Left cardiac atrium (tissue), 4 donors: ENCODE measurements at regions of chr19 and their contacts with region 1.

Region 1: DNA sequence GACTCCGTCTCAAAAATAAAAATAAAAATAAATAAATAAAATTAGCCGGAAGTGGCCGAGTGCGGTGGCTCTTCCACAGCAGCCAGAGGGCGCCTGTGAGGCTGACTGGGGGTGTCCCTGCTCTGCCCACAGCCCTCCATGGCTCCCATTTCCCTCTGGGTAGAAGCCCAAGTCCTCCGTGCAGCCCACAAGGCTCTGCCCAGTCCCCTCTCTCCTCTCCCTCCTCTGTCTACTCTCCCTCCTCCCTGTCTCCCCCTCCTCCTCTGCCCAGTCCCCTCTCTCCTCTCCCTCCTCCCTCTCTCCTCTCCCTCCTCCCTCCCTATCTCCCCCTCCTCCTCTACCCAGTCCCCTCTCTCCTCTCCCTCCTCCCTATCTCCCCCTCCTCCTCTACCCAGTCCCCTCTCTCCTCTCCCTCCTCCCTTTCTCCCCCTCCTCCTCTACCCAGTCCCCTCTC is 20.4 kb downstream of the MISP start:
- DNase-seq: no peak
- ATAC-seq: peak; percentile 35 to 54

Region 2: GRCh38 chr19:718991-719512 is 52.3 kb before region 1 on chr19:
- intact Hi-C with region 1: no loop called
- DNase-seq: peak; percentile 83
- ATAC-seq: peak; percentile 68 to 75

Region 3: GRCh38 chr19:801861-802497 is 30.6 kb after region 1 on chr19:
- intact Hi-C with region 1: no loop called
- DNase-seq: peak; percentile 66
- ATAC-seq: peak in 1 of 2 donors; percentile 16

Region 4: DNA sequence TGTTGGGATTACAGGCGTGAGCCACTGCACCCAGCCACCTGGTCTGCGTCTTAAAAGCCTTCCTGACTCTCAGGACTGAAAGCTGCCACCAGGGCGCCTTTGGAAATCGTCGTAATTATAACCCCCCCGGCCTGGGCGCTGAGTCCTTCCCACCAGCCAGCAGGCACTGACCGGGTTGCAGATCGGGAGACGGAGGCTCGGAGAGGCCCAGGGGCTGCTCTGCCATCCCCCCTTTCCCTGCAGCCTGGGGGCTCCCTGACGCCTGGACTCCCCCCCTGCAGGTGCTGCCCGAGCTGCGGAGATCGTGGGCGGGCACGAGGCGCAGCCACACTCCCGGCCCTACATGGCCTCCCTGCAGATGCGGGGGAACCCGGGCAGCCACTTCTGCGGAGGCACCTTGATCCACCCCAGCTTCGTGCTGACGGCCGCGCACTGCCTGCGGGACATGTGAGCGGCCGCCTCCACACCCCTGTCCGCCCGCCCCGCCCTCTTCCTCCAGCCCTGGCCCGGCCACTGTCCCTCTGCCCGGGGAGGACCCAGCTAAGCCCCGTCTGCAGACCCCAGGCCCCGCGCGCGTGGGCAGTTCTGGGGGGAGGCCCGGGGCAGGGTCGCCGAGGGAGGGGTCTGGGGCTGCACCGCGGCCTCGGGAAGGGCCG is 71.9 kb after region 1 on chr19:
- intact Hi-C with region 1: loop called in 1 of 2 experiments (anchors 10 kb)
- DNase-seq: no peak
- ATAC-seq: peak; percentile 20 to 41

Region 5: GRCh38 chr19:850221-850978 is 79.0 kb after region 1 on chr19:
- intact Hi-C with region 1: loop called (anchors 10 kb)
- DNase-seq: peak; percentile 94
- ATAC-seq: peak; percentile 84 to 88

Region 6: GRCh38 chr19:917323-918151 is 146.2 kb after region 1 on chr19 and contains the start of gene KISS1R:
- intact Hi-C with region 1: loop called (anchors 1 to 2 kb)
- DNase-seq: no peak
- ATAC-seq: no peak
- total RNA-seq, gene KISS1R: not detected

Region 7: GRCh38 chr19:925526-926322 is 154.4 kb after region 1 on chr19 and contains the start of gene ARID3A:
- intact Hi-C with region 1: loop called in 1 of 2 experiments (anchors 1 kb)
- DNase-seq: peak; percentile 83
- ATAC-seq: peak; percentile 84
- total RNA-seq, gene ARID3A: 5.3 to 5.8 TPM

Region 8: GRCh38 chr19:984165-984967 is 213.0 kb after region 1 on chr19 and contains the start of gene WDR18:
- intact Hi-C with region 1: loop called in 1 of 2 experiments (anchors 5 kb)
- DNase-seq: peak; percentile 96
- ATAC-seq: peak; percentile 96 to 97
- total RNA-seq, gene WDR18: 16.2 to 17.2 TPM